Activated naive CD4-positive, alpha-beta T cell treated with anti-CD3 and anti-CD28 coated beads for 36 hours (primary cell): ENCODE measurements at regions of chr6 and their contacts with region 1.

Region 1: GRCh38 chr6:28769626-28770402 is 154.0 kb downstream of the TRIM27 start:
- DNase-seq: no peak
- H3K4me3 Mint-ChIP-seq: no peak overlapping the region
- H3K27ac Mint-ChIP-seq: no peak overlapping the region
- H3K4me1 Mint-ChIP-seq: peaks cover 7% of the 10 kb centered on the region
- H3K27me3 Mint-ChIP-seq: peaks cover 97% of the 10 kb centered on the region

Region 2: DNA sequence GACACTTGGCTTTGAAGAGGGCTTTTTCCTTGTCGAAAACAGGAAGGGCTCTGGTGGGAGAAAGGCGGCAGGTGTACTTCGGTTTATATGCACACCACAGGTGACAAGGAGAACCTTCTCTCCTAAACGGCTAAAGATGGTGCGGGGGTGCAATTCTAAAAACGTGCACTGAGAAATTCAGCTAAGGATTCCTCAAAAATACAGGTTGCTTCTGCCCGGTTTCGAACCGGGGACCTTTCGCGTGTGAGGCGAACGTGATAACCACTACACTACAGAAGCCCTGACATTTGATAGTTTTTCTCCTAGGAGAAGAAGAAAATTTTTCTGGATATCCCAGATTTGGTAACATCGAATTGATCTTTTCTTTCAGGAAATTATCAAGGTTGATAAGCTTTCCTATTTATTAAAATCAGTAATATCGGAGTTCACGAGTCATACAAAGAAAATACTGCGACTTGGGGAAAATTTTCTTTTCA is 1489.7 kb before region 1 on chr6:
- CTCF ChIA-PET with region 1: no interaction called
- intact Hi-C with region 1: loop called (anchors 10 kb)
- DNase-seq: peak; percentile 43
- H3K4me3 Mint-ChIP-seq: peak overlapping the region; percentile 63
- H3K27ac Mint-ChIP-seq: peak overlapping the region; percentile 36
- H3K4me1 Mint-ChIP-seq: peaks cover 4% of the 10 kb centered on the region
- H3K27me3 Mint-ChIP-seq: peaks cover 70% of the 10 kb centered on the region